ENCODE measurements at regions of chr6 and their contacts with region 1.

Region 1: GRCh38 chr6:42390228-42390934 is 61.3 kb downstream of the TRERF1 start:
- DNase-seq: peak; percentile 88
- H3K4me3 Mint-ChIP-seq: peak overlapping the region; percentile 71
- H3K27ac Mint-ChIP-seq: peak overlapping the region; percentile 98
- H3K4me1 Mint-ChIP-seq: peaks cover 96% of the 10 kb centered on the region
- H3K27me3 Mint-ChIP-seq: no peaks in the 10 kb centered on the region

Region 2: DNA sequence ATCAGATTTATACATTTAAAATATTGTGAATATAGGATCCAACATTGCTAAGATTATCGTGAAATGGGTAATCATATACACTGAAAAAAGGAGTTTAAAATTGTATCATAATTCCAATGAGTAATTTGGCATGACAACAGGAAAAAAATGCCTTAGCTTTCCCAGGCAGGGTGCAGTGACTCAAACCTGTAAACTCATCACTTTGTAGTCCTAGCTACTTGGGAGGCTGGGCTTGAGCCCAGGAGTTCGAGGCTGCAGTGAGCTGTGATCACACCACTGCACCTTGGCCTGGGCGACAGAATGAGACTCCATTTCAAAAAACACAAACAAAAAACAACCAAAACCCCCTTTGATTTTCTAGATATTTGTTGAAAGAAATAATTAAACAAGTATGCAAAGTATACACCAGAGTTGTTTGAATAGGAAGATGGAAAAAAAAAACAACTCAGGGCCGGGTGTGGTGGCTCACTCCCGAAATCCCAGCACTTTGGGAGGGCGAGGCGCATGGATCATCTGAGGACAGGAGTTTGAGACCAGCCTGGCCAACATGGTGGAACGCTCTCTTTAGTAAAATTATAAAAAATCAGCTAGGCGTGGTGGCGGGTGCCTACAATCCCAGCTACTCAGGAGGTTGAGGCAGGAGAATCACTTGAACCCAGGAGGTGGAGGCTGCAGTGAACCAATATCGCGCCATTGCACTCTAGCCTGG is 37.4 kb before region 1 on chr6:
- CTCF ChIA-PET with region 1: no interaction called
- POLR2A ChIA-PET with region 1: interaction called, 17 read pairs
- intact Hi-C with region 1: loop called (anchors 1 kb)
- DNase-seq: no peak
- H3K4me3 Mint-ChIP-seq: no peak overlapping the region
- H3K27ac Mint-ChIP-seq: no peak overlapping the region
- H3K4me1 Mint-ChIP-seq: peaks cover 18% of the 10 kb centered on the region
- H3K27me3 Mint-ChIP-seq: no peaks in the 10 kb centered on the region

Region 3: GRCh38 chr6:42367353-42368011 is 22.9 kb before region 1 on chr6:
- CTCF ChIA-PET with region 1: interaction called, 13 read pairs
- POLR2A ChIA-PET with region 1: interaction called, 28 read pairs
- intact Hi-C with region 1: loop called (anchors 1 kb)
- DNase-seq: peak; percentile 48
- H3K4me3 Mint-ChIP-seq: peak overlapping the region; percentile 67
- H3K27ac Mint-ChIP-seq: peak overlapping the region; percentile 92
- H3K4me1 Mint-ChIP-seq: peaks cover 73% of the 10 kb centered on the region
- H3K27me3 Mint-ChIP-seq: no peaks in the 10 kb centered on the region

Region 4: DNA sequence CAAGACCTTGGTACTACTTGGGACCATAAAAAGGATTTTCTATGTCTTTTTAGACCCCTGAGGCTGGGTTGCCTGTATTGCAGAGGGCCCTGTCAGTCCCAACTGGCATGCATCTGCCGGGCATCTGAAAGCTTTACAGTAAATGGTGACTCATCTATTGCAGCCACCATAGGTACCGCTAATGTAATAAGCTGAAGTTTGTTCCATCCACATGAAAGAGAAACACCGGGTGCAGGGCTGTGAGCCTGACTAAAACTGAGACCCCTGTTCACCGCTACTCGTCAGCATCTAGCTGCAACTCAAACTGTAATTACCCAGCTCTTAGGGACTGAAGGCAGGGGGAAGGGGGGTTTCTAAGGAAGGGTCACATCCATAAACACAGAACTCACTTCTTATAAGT is 11.8 kb after region 1 on chr6:
- CTCF ChIA-PET with region 1: interaction called, 18 read pairs
- POLR2A ChIA-PET with region 1: interaction called, 69 read pairs
- intact Hi-C with region 1: loop called (anchors 1 kb)
- DNase-seq: peak; percentile 85
- H3K4me3 Mint-ChIP-seq: no peak overlapping the region
- H3K27ac Mint-ChIP-seq: peak overlapping the region; percentile 76
- H3K4me1 Mint-ChIP-seq: peaks cover 81% of the 10 kb centered on the region
- H3K27me3 Mint-ChIP-seq: no peaks in the 10 kb centered on the region

Region 5: DNA sequence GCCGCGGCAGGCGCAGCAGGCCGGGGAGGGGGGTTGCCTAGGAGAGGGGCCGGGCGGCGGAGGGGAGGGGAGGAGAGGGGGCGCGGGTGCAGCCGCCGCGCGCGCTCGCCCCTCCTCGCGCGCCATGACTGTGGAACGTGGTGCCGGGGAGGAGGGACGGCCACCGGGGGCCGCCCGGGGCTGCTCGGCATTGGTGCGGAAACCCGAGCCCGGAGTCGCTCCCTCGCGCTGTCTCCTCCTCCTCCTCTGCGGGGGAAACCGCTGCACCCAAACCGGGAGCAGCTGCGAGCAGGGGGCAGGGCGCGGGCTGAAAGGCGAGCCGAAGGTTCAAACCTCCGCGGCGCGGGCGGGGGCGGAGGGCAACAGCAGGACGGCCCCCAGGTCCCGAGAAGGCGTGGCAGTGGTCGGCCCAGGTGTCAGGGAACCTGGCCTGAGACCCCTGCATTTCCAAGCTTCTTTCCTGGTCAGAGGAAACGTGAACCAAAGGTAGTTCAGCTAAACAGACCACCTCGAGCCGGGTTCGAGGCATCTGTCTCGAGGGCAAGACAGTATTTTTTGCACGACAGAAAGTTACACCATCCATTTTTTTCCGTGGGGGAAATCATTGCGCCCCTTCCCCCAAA is 62.8 kb after region 1 on chr6:
- CTCF ChIA-PET with region 1: interaction called, 6 read pairs
- POLR2A ChIA-PET with region 1: interaction called, 20 read pairs
- intact Hi-C with region 1: loop called (anchors 1 kb)
- DNase-seq: peak; percentile 86
- H3K4me3 Mint-ChIP-seq: peak overlapping the region; percentile 98
- H3K27ac Mint-ChIP-seq: no peak overlapping the region
- H3K4me1 Mint-ChIP-seq: peaks cover 23% of the 10 kb centered on the region
- H3K27me3 Mint-ChIP-seq: no peaks in the 10 kb centered on the region

Region 6: DNA sequence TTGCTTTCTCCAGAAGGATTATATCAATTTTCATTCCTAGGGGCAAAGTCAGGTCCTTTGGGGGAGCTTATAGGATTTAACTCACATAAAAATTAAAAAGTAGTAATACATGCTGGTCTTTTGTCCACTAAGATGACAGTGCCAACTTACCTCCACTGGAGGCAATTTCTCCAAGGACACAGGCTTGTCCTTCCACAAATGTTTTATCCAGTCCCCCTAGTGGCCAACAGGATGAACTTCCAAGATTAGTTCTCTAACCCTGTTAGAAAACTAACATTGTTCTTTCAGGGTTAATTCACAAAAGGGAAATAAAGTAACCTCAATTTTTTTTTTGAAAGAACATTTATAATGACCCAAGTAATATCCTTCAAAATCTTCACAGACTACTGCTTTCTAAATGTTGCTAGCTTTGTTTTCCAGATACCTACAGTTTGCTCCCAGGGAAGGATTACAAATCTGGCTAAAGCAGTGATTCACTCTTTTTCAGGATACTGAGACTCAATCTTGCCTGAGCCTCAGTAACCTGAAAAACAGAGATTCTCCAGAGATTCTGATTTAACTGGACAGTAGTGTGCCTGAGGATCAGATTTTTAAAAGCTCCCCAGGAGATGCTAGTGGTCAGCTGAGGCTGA is 141.8 kb after region 1 on chr6:
- CTCF ChIA-PET with region 1: interaction called, 19 read pairs
- POLR2A ChIA-PET with region 1: no interaction called
- intact Hi-C with region 1: no loop called
- DNase-seq: no peak
- H3K4me3 Mint-ChIP-seq: no peak overlapping the region
- H3K27ac Mint-ChIP-seq: no peak overlapping the region
- H3K4me1 Mint-ChIP-seq: peaks cover 4% of the 10 kb centered on the region
- H3K27me3 Mint-ChIP-seq: no peaks in the 10 kb centered on the region

Measured in activated CD4-positive, alpha-beta memory T cell treated with anti-CD3 and anti-CD28 coated beads for 36 hours (primary cell).